H1 (cell line): ENCODE measurements at regions of chr1 and their contacts with region 1.

Region 1: GRCh38 chr1:53725238-53725689 is 13.7 kb downstream of the GLIS1 start:
- DNase-seq: peak; percentile 36 to 72
- H3K4me3 ChIP-seq: no peak overlapping the region
- H3K27ac ChIP-seq: no peak overlapping the region
- H3K4me1 ChIP-seq: peaks cover 0 to 3% (median 1%) of the 10 kb centered on the region in 4 experiments; a peak in 3 of 7 replicates
- H3K27me3 ChIP-seq: no peaks in the 10 kb centered on the region; a peak in 1 of 7 replicates
- CTCF ChIP-seq: peak; percentile 80 to 98 (median 81)
- EP300 ChIP-seq: no peak
- POLR2A ChIP-seq: no peak
- RAD21 ChIP-seq: peak; percentile 78 to 87

Region 2: DNA sequence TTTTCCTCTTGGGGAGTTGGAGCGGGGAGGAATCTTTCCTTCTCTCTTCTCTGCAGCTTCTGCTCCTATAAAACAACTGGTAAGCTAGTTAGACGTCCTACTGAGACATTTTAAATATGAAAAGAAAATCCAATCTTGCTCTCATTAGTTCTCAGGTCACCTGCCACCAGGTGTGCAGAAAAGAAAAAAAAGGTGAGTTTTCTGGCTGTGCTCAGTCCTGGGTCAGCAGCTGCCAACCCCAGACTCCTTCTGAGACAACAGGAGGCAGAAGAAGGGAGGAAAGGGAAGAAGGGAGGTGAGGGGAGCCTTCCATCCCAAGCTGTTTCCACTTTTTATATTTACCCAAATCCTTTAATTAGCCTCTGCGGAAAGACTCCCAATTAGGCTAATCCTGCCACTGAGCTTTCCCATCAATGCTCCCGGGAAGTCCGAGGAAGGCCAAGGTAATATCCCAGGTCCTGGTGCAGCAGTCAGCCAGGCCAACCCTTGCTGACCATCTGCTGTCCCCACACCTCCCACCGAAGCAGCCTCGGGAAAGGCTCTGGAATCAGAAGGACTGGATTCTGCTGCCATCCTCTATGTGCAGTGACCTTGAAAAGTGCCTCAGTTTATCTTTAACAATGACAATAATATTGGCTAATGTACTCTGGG is 19.7 kb before region 1 on chr1:
- CTCF ChIA-PET with region 1: interaction called, 28 read pairs
- POLR2A ChIA-PET with region 1: no interaction called
- DNase-seq: no peak
- H3K4me3 ChIP-seq: peak overlapping the region in 2 of 4 experiments; percentile 10 to 26; a peak in 4 of 8 replicates
- H3K27ac ChIP-seq: 0 out of 2 replicates have a peak overlapping the region, but pooled peaks have one; percentile 20
- H3K4me1 ChIP-seq: peaks cover 21 to 34% (median 29%) of the 10 kb centered on the region in 4 experiments
- H3K27me3 ChIP-seq: no peaks in the 10 kb centered on the region
- CTCF ChIP-seq: no peak
- EP300 ChIP-seq: no peak
- POLR2A ChIP-seq: no peak
- RAD21 ChIP-seq: no peak

Region 3: DNA sequence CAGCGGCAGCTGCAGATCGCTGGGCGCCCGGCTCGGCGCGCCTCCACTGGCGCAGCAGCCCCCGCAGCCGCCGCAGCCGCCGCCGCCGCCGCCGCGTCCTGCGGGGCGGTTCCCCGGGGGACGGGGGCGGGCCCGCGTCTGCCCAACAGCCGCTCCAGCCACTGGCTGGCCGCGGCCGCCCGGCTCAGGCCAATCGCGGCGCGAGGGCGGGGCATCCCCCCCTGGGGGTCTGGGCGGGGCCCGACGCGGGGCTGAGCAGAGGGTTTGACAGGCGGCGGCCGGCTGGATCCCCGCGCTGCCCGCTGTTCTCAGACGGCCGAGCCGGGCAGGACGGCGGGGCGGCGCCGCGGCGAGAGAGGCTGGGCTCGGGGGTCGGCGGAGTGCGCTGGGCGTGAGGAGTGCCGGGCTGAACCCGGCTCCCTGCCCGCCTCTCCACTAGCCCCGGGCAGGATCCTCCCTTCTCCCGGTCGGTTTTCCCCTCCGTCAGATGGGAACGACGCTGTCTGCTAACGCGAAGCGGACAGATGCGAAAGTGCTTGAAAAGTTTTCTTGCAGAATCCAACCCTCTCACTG is 13.9 kb after region 1 on chr1 and contains the start of gene GLIS1:
- CTCF ChIA-PET with region 1: interaction called, 39 read pairs
- POLR2A ChIA-PET with region 1: interaction called, 4 read pairs
- DNase-seq: peak; percentile 33 to 97
- H3K4me3 ChIP-seq: peak within 1 kb of the TSS; percentile 31 to 61 (median 44)
- H3K27ac ChIP-seq: no peak within 1 kb of the TSS
- H3K4me1 ChIP-seq: peaks cover 0 to 9% (median 3%) of the 10 kb centered on the region in 4 experiments; a peak in 5 of 7 replicates
- H3K27me3 ChIP-seq: peaks cover 41 to 56% (median 55%) of the 10 kb centered on the region in 4 experiments
- CTCF ChIP-seq: no peak
- EP300 ChIP-seq: no peak
- POLR2A ChIP-seq: no peak
- RAD21 ChIP-seq: no peak
- total RNA-seq, gene GLIS1: 0.21 and 0.22 TPM in 2 replicates

Region 4: GRCh38 chr1:53754484-53755312 is 29.4 kb after region 1 on chr1:
- CTCF ChIA-PET with region 1: interaction called, 35 read pairs
- POLR2A ChIA-PET with region 1: no interaction called
- DNase-seq: no peak
- H3K4me3 ChIP-seq: no peak overlapping the region
- H3K27ac ChIP-seq: no peak overlapping the region
- H3K4me1 ChIP-seq: no peaks in the 10 kb centered on the region
- H3K27me3 ChIP-seq: no peaks in the 10 kb centered on the region
- CTCF ChIP-seq: peak; percentile 26 to 82 (median 69)
- EP300 ChIP-seq: no peak
- POLR2A ChIP-seq: no peak
- RAD21 ChIP-seq: peak; percentile 76 to 77

Region 5: DNA sequence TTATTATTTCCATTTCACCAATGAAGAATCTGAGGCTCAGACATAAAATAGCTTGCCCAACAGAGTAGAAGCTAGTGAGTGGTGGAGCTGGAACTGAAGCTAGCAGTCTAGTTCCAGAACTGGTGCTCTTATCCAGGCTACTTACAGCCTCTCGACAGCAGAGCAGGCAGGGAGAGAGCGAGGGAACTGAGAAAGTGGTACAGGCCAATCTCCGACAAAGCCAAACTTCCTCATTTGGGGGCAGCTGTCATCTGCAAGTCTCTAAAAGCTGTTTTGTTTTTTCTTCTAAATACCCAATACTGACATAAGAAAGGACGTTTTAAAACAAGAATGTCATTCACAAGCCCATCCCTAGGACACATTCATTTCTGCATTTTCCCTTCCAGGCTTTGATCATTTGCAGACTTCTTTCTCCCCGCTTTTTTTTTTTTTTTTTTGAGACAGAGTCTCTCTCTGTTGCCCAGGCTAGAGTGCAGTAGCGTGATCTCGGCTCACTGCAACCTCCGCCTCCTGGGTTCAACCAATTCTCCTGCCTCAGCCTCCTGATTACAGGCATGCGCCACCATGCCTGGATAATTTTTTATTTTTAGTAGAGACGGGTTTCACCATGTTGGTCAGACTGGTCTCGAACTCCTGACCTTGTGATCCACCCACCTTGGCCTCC is 144.3 kb after region 1 on chr1:
- CTCF ChIA-PET with region 1: no interaction called
- POLR2A ChIA-PET with region 1: no interaction called
- DNase-seq: no peak
- H3K4me3 ChIP-seq: no peak overlapping the region
- H3K27ac ChIP-seq: no peak overlapping the region
- H3K4me1 ChIP-seq: no peaks in the 10 kb centered on the region
- H3K27me3 ChIP-seq: no peaks in the 10 kb centered on the region
- CTCF ChIP-seq: no peak
- EP300 ChIP-seq: no peak
- POLR2A ChIP-seq: no peak
- RAD21 ChIP-seq: no peak